Posterior vena cava (tissue), 2 donors: ENCODE measurements at regions of chr3 and their contacts with region 1.

Region 1: DNA sequence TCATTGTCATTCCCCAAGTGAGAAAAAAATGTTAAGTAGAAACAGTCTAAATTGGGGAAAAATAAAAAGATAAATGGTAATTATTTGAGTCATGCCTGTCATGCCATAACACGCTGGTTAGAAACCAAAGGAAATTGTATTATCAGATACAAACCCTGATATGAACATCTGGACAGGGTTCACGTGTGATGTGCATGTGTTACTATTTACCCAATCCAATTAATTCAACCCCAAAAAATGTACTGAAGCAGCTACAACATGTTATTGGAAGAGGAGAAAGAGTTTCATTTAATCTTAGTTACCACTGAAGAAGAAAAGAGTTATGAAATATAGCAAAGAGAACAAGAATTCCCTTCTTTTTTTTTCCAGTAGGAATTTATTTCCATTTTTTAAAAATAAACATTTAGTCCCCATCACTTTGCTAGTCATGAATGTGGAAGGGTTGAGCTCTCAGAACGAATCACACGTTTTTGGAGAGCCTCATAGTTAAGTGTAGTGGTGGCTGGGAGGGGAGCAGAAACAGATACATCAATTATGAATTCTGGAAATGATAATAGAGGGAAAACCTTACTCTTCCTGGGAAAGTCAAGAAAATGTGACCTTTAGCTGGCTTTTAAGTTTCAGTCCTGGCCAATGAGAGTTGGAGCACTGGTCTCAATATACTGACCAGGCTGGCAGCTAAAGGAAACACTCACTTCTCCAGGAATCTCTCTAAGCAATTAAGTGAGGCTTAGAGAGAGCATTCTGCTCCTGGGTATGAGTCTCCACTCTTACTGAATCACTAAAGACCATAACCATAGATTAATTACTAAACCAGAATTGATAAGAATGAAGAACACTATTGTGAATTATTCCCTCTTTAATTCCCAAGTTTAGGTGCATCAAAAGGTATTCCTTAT is 796.5 kb downstream of the GRM7 start:
- DNase-seq: no peak

Region 2: DNA sequence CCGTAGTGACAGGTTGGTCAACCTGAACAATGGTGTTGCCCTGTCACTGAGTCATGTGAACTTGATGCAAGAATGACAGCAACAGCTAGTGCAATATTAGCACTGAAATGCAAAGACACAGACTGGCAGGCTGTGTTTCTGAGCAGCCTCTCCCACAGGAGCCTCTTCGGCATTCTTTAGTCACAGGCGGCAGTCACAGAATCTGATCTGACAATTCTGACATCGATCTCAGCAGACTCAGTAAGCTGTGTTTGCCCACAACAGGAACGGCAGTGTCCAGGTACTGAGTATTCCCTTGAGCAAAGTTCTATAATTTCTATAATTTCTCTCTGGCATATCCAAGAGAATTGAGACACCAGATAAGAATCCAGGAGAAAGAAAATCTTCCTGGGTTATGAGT is 19.8 kb before region 1 on chr3:
- intact Hi-C with region 1: loop called in 1 of 2 experiments (anchors 2 kb)
- DNase-seq: no peak